AG04449 (cell line): ENCODE measurements at regions of chr13 and their contacts with region 1.

Region 1: DNA sequence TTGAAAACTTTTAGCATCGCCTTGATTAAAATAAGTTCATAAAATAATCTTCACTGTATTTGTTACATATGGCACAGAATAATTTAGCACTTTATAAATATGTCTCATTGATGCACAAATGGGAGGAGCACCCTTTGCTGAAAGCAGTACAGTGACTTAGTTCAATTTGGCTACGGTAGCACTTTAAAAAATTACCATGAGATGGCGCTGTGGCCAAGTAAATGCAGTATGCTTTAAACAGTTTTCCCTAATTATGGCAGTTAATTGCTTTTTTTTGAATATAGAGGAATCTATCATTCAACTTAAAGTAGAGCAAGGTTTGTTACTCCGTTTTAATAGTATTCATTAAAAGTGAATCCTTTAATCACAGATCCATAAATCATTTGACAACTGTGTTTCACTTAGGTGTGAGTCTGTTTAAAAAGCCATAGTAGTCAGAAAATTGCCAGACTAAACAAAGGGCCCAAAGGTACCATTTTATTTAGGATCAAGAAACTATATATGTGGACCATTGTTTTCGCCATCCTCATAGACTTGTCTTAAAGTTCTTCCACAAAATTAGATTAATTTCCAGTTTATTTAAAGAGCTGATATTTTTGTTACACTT is 34.7 kb upstream of the ESD start:
- DNase-seq: no peak
- H3K4me3 ChIP-seq: no peak overlapping the region
- CTCF ChIP-seq: peak; percentile 55

Region 2: GRCh38 chr13:46622630-46623256 is 208.9 kb before region 1 on chr13:
- CTCF ChIA-PET with region 1: no interaction called
- POLR2A ChIA-PET with region 1: no interaction called
- DNase-seq: peak; percentile 60
- H3K4me3 ChIP-seq: no peak overlapping the region
- CTCF ChIP-seq: no peak

Region 3: DNA sequence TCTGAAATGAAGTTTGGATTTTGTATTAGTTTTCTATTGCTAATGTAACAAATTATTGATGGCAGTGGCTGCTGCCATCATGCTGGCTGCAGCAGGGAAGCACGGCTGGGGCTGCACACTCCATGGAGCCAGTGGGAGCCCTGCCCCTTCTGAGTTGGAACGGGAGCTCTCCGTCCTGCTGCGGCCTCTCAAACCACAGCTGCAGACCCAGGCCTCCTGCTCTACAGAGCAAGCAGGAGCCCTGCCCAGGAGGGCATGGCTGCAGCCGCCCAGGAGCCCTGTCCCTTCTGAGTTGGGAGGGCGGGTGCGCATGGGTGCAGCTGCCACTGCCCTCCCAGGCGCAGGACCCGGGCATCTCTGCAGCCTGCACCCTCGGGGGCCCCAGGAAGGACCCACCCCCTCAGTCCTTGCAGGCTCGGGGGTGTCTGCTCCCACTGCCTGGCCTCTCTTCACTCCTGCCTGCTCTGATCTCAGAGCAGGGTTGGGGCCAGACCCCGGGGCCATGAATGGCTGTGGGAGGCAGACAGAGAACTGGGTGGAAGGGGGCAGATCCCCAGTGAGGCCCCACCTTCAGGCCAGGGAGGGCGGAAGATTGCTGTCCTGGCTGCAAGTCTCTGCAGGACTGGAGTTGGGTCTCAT is 13.7 kb before region 1 on chr13:
- CTCF ChIA-PET with region 1: interaction called, 13 read pairs
- POLR2A ChIA-PET with region 1: no interaction called
- DNase-seq: no peak
- H3K4me3 ChIP-seq: no peak overlapping the region
- CTCF ChIP-seq: no peak

Region 4: GRCh38 chr13:46850214-46850613 is 18.5 kb after region 1 on chr13:
- CTCF ChIA-PET with region 1: interaction called, 18 read pairs
- POLR2A ChIA-PET with region 1: no interaction called
- DNase-seq: no peak
- H3K4me3 ChIP-seq: no peak overlapping the region
- CTCF ChIP-seq: no peak

Region 5: GRCh38 chr13:47774671-47774994 is 942.9 kb after region 1 on chr13:
- CTCF ChIA-PET with region 1: interaction called, 27 read pairs
- POLR2A ChIA-PET with region 1: no interaction called
- DNase-seq: no peak
- H3K4me3 ChIP-seq: no peak overlapping the region
- CTCF ChIP-seq: no peak